PC-9 (cell line): ENCODE measurements at regions of chr7 and their contacts with region 1.

Region 1: DNA sequence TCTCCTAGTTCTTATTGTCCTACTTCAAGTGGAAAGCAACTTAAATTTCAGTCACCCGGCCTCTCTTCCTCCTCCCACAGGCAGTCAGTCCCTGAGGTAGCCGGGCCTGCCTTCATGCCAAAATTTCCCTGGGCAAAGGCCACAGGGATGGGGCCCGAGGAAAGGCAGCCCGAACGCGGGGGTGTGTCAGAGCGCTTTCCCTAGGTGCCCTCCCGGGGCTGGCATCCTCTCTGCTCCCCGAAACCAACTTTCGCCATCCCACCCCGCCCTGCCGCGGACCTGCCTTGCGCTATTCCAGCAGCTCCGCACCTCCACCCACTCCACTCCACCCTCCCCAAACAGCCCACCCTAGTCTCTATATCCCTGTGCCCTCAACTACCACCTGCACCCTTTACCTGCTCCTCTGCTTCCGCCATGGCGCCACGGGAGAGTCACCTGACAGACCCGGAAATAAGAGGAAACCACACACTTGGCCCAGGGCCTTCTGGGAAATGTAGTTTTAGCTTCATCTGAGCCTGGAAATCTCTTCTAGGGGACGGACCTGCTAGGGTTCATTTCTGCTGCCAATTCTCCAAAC is at the start of gene VPS41:
- DNase-seq: peak; percentile 75 to 85
- H3K4me3 ChIP-seq: peak within 1 kb of the TSS; percentile 83
- H3K27ac ChIP-seq: peak within 1 kb of the TSS; percentile 13; the same call in 1 of the 2 replicates
- H3K4me1 ChIP-seq: peaks cover 20% of the 10 kb centered on the region
- H3K27me3 ChIP-seq: no peaks in the 10 kb centered on the region
- CTCF ChIP-seq: no peak
- total RNA-seq, gene VPS41: 83.0 and 92.3 TPM in 2 replicates

Region 2: DNA sequence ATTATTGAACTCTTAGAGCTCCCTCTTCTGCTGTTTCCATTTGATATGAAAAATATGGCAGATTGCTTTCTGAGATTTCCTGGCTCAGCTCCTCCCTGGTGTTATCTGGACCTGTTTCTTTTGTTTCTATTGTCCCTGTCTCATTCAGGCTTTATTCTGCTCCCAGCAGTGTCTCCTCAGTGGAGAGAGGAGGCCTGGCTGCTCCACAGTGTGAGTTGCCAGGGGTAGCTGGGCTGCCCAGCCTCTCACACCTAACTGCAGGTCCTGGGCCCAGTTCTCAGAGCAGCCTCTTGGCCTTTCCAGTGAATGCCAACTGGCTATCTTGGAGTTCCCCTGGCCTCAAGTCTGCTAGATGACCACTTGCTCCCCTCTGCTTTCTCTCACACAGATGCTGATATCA is 126.9 kb before region 1 on chr7:
- CTCF ChIA-PET with region 1: no interaction called
- POLR2A ChIA-PET with region 1: no interaction called
- intact Hi-C with region 1: no loop called
- DNase-seq: no peak
- H3K4me3 ChIP-seq: no peak overlapping the region
- H3K27ac ChIP-seq: no peak overlapping the region
- H3K4me1 ChIP-seq: no peaks in the 10 kb centered on the region
- H3K27me3 ChIP-seq: no peaks in the 10 kb centered on the region
- CTCF ChIP-seq: no peak

Region 3: DNA sequence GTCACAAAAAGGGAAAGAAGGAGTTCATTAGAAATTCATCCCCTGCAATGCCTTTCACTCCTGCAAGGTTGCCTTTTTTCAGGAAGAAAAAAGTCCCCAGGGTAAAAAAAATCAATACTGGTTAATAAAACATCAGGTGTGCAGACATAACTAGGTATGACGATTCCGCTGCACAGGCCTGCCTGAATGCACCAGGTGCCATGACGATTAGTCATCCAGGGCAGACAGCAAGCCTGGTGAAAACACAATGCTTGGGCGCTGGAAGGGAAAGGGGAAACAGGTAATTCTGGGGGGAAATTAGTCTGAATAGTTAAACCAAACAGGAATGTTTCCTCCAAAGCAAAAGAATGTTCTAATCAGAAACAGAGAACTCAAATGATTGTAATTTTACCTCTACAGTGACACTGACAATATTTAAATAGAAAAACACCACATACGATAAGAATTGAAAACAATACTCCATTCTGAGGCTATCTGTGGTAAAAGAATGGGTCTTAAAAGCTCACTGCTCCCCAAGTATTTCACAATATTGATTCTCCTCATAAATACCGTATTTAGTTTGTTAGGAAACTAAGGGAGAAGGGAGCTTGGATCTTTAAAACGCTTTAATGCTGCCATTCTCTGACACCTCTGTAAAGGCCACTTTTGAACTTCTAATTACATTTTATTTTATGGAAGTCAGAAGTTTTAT is 45.1 kb before region 1 on chr7:
- CTCF ChIA-PET with region 1: no interaction called
- POLR2A ChIA-PET with region 1: no interaction called
- intact Hi-C with region 1: loop called (anchors 2 kb)
- DNase-seq: peak; percentile 86 to 99
- H3K4me3 ChIP-seq: peak overlapping the region; percentile 41
- H3K27ac ChIP-seq: peak overlapping the region; percentile 79
- H3K4me1 ChIP-seq: peaks cover 33% of the 10 kb centered on the region
- H3K27me3 ChIP-seq: no peaks in the 10 kb centered on the region
- CTCF ChIP-seq: no peak

Region 4: DNA sequence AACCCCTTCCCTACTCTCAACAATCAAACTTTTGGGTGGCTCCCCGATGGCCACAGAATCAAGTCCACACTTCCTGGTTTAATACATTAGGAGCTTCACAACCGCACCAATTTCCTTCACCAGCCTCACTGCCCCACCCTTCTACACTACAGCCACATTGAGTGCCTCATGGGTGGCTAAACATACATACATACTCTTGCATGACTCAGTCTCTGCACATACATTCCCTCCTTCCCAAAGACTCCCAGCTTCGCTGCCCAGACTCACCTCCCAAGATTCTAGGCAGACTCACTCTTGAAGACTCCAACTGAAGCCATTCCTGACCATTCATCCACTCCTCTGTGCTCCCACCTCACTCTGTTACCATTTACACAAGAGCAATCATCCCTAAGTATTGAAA is 15.8 kb before region 1 on chr7:
- CTCF ChIA-PET with region 1: interaction called, 10 read pairs
- POLR2A ChIA-PET with region 1: no interaction called
- intact Hi-C with region 1: no loop called
- DNase-seq: no peak
- H3K4me3 ChIP-seq: no peak overlapping the region
- H3K27ac ChIP-seq: no peak overlapping the region
- H3K4me1 ChIP-seq: no peaks in the 10 kb centered on the region
- H3K27me3 ChIP-seq: no peaks in the 10 kb centered on the region
- CTCF ChIP-seq: no peak